Heart left ventricle (tissue), 16 donors: ENCODE measurements at regions of chr17 and their contacts with region 1.

Region 1: GRCh38 chr17:57597531-57598453 is 147.3 kb downstream of the CCDC182 start:
- DNase-seq: peak in 4 of 5 donors; percentile 72 to 80 (median 76)
- ATAC-seq: peak in 3 of 4 donors; percentile 40 to 79 (median 76)
- H3K4me3 ChIP-seq: no peak overlapping the region
- H3K27ac ChIP-seq: peak overlapping the region in 5 of 12 donors; percentile 30 to 84 (median 49)
- H3K4me1 ChIP-seq: peaks cover 0 to 63% (median 24%) of the 10 kb centered on the region in 12 donors
- H3K27me3 ChIP-seq: no peaks in the 10 kb centered on the region
- CTCF ChIP-seq: peak; percentile 76 to 92 (median 85)
- POLR2A ChIP-seq: no peak

Region 2: GRCh38 chr17:57261084-57261461 is 336.7 kb before region 1 on chr17:
- intact Hi-C with region 1: loop called in 1 of 10 experiments (anchors 10 kb)
- DNase-seq: no peak
- ATAC-seq: no peak
- H3K4me3 ChIP-seq: no peak overlapping the region
- H3K27ac ChIP-seq: no peak overlapping the region
- H3K4me1 ChIP-seq: peaks cover 0 to 47% (median 21%) of the 10 kb centered on the region in 12 donors
- H3K27me3 ChIP-seq: no peaks in the 10 kb centered on the region
- CTCF ChIP-seq: no peak
- POLR2A ChIP-seq: no peak

Region 3: GRCh38 chr17:57440522-57441485 is 157.0 kb before region 1 on chr17:
- intact Hi-C with region 1: loop called in 2 of 10 experiments (anchors 5 to 10 kb)
- DNase-seq: peak; percentile 76 to 88 (median 78)
- ATAC-seq: peak; percentile 74 to 86 (median 84)
- H3K4me3 ChIP-seq: peak overlapping the region in 1 of 12 donors; percentile 7
- H3K27ac ChIP-seq: peak overlapping the region; percentile 11 to 87 (median 69)
- H3K4me1 ChIP-seq: peaks cover 4 to 91% (median 57%) of the 10 kb centered on the region in 12 donors
- H3K27me3 ChIP-seq: no peaks in the 10 kb centered on the region
- CTCF ChIP-seq: peak; percentile 16 to 80 (median 56)
- POLR2A ChIP-seq: no peak

Region 4: GRCh38 chr17:57671667-57672632 is 74.2 kb after region 1 on chr17:
- intact Hi-C with region 1: loop called (anchors 1 to 5 kb)
- DNase-seq: peak; percentile 80 to 87 (median 82)
- ATAC-seq: peak; percentile 78 to 91 (median 88)
- H3K4me3 ChIP-seq: no peak overlapping the region
- H3K27ac ChIP-seq: peak overlapping the region in 2 of 12 donors; percentile 8 to 35
- H3K4me1 ChIP-seq: peaks cover 0 to 28% (median 10%) of the 10 kb centered on the region in 12 donors
- H3K27me3 ChIP-seq: no peaks in the 10 kb centered on the region
- CTCF ChIP-seq: peak; percentile 87 to 97 (median 96)
- POLR2A ChIP-seq: no peak

Region 5: GRCh38 chr17:57747221-57748017 is 149.6 kb after region 1 on chr17:
- intact Hi-C with region 1: loop called in 9 of 10 experiments (anchors 2 to 10 kb)
- DNase-seq: no peak
- ATAC-seq: peak; percentile 37 to 62 (median 44)
- H3K4me3 ChIP-seq: no peak overlapping the region
- H3K27ac ChIP-seq: no peak overlapping the region
- H3K4me1 ChIP-seq: peaks cover 0 to 7% (median 0%) of the 10 kb centered on the region in 12 donors
- H3K27me3 ChIP-seq: peaks cover 0 to 3% (median 0%) of the 10 kb centered on the region in 9 donors
- CTCF ChIP-seq: peak; percentile 51 to 83 (median 74)
- POLR2A ChIP-seq: no peak

Region 6: DNA sequence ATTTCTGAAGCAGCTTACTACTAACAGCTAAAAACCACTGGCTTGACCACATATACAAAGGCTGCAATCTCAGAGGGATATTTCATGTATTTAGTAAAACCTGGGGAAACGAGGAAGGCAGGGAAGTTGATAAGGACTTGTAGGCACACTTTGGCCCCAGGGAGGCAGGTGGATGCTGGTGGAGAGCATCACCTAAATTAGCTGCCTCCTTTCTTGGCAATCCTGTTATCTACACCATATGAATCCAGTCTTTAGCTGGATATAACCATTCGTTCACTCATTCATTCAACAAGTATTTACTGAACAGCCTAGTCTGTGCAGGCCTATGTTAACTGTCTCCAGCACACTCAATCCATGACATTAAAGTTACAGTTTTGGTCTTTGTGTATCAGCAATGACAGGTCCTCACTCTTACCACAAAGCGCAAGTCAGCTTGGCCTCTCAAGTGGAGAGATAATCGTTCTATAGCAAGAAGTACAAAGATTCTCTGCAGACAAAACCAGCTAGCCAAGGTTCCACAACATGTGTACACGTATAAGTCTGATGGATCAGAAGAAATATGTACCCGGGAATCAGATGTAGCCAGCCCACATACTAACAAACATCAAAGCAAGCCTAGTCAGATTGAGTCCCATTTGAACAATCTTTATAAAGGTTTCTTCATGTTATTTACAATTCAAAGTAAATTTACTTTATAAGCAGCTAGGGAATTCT is 241.2 kb after region 1 on chr17:
- intact Hi-C with region 1: loop called in 4 of 10 experiments (anchors 5 to 10 kb)
- DNase-seq: no peak
- ATAC-seq: peak in 1 of 4 donors; percentile 37
- H3K4me3 ChIP-seq: no peak overlapping the region
- H3K27ac ChIP-seq: peak overlapping the region; percentile 9 to 95 (median 78)
- H3K4me1 ChIP-seq: peaks cover 0 to 58% (median 15%) of the 10 kb centered on the region in 12 donors
- H3K27me3 ChIP-seq: no peaks in the 10 kb centered on the region
- CTCF ChIP-seq: no peak
- POLR2A ChIP-seq: no peak